Activated T-helper 1 cell treated with anti-CD3 and anti-CD28 coated beads, Interleukin-12 subunit alpha, Interleukin-12 subunit beta, Interleukin-2, Interleukin-4 antibody, amounts not matched to agents 30 ng/mL and 10 ng/mL and 1 ng/mL, durations not matched to agents 14 hours and 24 hours and 36 hours (primary cell): ENCODE measurements at regions of chr1 and their contacts with region 1.

Region 1: DNA sequence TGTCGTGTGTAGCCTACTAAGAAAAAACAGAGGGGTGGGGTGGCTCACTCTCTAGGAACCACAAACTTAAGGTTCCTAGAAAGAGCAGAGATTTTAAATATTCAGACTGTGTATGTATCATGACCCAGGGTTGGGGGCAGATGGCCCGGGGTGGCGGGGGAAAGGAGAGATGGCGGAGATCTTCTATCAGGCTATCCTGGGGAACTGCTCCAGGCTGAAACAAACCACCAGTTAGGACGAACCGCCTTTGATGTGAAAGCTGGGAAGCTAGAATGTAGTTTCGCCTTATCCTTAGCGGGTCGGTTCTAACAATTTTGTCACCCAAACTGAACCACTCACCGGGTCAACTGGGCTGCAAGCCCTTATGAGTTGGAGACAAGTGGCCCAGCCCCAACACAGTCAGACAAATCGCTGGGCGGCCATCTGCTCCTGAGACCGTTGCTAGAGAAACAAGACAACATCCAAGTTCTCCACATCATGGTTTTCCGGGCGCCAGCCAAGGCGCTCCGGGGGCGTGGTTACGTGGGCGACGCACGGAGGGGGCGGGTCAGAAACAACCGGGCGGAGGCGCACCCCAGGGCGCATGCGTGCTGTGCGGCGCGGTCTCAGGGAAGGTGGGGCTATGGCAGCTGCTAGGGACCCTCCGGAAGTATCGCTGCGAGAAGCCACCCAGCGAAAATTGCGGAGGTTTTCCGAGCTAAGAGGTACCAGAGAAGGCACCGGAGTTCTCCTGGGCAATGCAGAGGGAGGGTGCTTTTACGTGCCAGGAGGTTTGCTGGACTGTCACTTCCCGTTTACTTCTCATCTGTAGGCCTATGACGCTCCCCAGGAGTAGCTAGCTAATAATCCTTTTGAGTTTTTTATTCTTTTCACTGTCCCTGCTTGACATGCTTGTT is at the starts of genes FPGT and LRRIQ3:
- DNase-seq: peak; percentile 93
- H3K4me3 Mint-ChIP-seq: peak within 1 kb of the TSS; percentile 92
- H3K27ac Mint-ChIP-seq: peak within 1 kb of the TSS; percentile 92
- H3K4me1 Mint-ChIP-seq: peaks cover 16% of the 10 kb centered on the region
- H3K27me3 Mint-ChIP-seq: no peaks in the 10 kb centered on the region
- total RNA-seq, gene FPGT: 6.5 and 8.3 TPM in 2 replicates
- total RNA-seq, gene LRRIQ3: 0.31 and 0.49 TPM in 2 replicates

Region 2: DNA sequence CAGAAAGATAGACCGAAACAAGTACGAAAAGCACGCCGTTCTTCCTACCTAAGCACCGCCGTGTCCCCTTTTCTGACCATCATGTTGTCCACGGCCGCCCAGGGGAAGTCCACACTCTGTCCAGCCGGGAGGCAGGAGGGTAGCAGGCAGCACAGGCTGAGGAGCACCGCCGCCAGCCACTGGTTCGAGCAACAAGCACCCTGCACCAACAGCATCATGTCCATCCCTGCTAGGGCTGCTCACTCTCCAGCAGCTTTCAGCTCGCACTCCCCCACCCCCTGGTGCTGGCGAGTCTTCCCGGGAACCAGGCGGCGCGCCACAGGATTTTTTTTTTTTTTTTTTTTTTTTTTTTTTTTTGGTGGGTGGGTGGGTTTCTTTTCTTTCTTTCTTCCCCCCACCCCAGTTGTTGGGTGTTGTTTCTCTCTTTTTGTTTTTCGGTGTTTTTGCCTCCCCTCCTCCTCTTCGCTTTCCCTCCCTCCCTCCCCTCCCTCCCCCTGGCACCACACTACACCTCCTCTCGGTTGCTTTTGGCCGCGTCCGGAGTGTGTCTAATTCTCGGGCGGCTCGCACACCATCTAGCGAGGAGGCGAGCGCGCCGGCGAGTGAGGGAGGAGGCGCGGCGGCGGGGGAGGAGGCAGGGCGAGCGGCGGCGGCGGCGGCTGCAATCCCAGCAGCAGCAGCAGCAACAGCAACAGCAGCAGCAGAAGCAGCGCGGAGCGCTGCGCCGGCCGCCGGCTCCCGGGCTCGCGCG is 1915.5 kb before region 1 on chr1 and contains the start of gene NEGR1:
- intact Hi-C with region 1: loop called (anchors 10 kb)
- DNase-seq: peak; percentile 48
- H3K4me3 Mint-ChIP-seq: peak within 1 kb of the TSS; percentile 75
- H3K27ac Mint-ChIP-seq: peak within 1 kb of the TSS; percentile 18
- H3K4me1 Mint-ChIP-seq: peaks cover 14% of the 10 kb centered on the region
- H3K27me3 Mint-ChIP-seq: peaks cover 35% of the 10 kb centered on the region
- total RNA-seq, gene NEGR1: not detected in 2 replicates